Dendritic cell treated with granulocyte-macrophage colony-stimulating factor and Interleukin-4, amounts not matched to agents 40 ng/mL and 50 ng/mL, for 4 days (primary cell): ENCODE measurements at regions of chr1 and their contacts with region 1.

Region 1: DNA sequence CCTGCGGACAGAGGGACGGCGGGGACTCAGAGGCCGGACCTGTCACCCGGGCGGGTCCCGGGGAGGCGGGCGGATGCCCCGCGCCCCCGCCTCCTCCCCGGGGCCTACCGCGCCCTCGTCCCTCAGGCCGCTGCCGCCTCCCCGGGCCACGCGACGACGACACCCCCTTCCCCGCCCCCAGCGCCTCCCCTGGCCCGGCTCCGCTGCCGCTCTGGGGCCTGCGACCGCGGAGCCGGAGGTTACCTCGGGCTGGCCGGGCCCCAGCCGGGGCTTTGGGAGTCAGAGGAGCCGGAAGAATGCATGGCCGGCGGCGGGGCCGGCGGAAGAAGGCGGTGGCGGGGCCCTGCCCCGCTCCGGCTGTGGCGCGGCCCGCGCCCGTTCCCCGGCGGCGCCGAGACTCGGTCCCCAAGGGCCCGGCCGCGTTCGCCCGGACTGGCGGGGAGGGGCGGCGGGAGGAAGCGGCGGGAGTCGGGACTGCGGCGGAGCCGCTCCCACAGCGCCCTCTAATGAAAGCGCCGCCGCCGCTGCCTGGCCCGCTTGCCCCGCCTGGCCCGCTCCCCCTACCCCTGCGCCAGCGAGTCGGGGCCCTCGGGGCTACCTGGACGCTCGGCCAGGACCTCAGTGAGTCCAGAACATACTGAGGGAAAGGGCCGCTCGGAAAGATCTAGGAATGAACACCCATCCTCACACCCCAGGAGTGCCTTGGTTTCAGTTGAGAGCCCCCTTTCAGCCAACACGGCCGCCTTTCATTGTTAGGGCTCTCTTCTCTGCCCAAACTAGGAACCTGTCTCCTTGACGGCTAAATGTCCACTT is at the start of gene LPGAT1:
- H3K4me3 Mint-ChIP-seq: peak within 1 kb of the TSS; percentile 98
- H3K27ac Mint-ChIP-seq: peak within 1 kb of the TSS; percentile 93
- H3K4me1 Mint-ChIP-seq: peaks cover 35% of the 10 kb centered on the region
- H3K27me3 Mint-ChIP-seq: peaks cover 1% of the 10 kb centered on the region

Region 2: GRCh38 chr1:211309617-211310016 is 520.9 kb before region 1 on chr1:
- intact Hi-C with region 1: no loop called
- H3K4me3 Mint-ChIP-seq: no peak overlapping the region
- H3K27ac Mint-ChIP-seq: no peak overlapping the region
- H3K4me1 Mint-ChIP-seq: peaks cover 6% of the 10 kb centered on the region
- H3K27me3 Mint-ChIP-seq: no peaks in the 10 kb centered on the region

Region 3: GRCh38 chr1:211680752-211681327 is 149.7 kb before region 1 on chr1:
- intact Hi-C with region 1: loop called (anchors 5 kb)
- H3K4me3 Mint-ChIP-seq: no peak overlapping the region
- H3K27ac Mint-ChIP-seq: no peak overlapping the region
- H3K4me1 Mint-ChIP-seq: peaks cover 8% of the 10 kb centered on the region
- H3K27me3 Mint-ChIP-seq: peaks cover 7% of the 10 kb centered on the region

Region 4: DNA sequence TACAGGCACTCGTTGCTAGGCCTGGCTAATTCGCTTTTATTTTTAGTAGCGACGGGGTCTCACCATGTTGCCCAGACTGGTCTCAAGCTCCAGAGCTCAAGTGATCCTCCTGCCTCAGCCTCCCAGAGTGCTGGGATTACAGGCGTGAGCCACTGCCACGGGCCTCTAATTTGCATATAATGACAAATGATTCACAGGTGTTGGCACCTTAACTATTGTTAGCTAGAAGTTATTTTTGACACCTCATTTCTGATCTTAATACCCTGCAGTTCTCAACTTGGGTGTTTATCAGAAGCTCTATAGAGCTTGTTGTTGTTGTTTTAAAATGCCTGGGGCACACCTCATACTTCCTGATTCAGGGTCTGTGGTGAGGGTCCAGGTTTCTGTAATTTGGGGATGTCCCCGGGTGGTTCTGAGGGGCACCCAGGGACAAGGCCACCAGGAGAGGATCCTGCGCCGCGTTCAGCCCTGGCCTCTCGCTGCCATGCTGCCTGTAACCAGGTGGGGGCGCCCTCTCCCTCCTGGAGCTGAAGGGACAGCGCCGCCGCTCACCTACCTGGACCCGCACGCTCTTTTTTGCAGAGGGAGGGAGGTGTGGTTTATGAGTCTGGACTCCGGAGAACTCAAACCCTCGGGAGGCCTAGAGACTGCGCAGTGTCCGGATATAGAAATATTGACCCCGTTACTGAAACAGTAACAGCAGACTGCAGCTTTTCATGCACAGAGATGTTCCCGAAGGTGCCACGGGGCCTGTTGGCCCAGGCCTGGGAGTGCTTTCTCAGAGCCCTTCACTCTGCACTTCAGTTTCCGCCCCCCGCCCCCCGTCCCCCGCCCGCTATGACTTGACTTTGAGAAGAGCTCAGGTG is 132.1 kb before region 1 on chr1:
- intact Hi-C with region 1: loop called (anchors 5 kb)
- H3K4me3 Mint-ChIP-seq: peak overlapping the region; percentile 55
- H3K27ac Mint-ChIP-seq: no peak overlapping the region
- H3K4me1 Mint-ChIP-seq: peaks cover 15% of the 10 kb centered on the region
- H3K27me3 Mint-ChIP-seq: peaks cover 26% of the 10 kb centered on the region

Region 5: DNA sequence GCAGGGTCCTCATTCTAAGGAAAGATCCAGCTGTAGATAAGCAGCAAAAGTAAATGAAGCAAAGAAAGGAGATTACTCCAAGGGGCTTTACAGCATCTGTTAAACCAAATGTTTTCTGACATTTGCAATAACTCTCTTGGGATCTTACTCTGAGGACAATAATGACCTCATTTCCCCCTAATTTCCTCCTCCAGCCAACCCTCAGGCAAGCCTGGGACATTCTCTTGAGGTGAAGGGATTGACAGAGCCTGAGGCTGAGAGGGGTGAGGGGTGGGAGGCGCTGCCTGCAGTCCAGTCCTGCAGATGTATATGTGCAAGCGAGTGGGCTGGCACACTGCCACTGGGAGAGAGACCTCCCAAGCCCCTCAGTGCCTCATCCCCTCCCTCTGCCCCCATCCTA is 114.6 kb before region 1 on chr1:
- intact Hi-C with region 1: no loop called
- H3K4me3 Mint-ChIP-seq: no peak overlapping the region
- H3K27ac Mint-ChIP-seq: no peak overlapping the region
- H3K4me1 Mint-ChIP-seq: peaks cover 4% of the 10 kb centered on the region
- H3K27me3 Mint-ChIP-seq: no peaks in the 10 kb centered on the region

Region 6: DNA sequence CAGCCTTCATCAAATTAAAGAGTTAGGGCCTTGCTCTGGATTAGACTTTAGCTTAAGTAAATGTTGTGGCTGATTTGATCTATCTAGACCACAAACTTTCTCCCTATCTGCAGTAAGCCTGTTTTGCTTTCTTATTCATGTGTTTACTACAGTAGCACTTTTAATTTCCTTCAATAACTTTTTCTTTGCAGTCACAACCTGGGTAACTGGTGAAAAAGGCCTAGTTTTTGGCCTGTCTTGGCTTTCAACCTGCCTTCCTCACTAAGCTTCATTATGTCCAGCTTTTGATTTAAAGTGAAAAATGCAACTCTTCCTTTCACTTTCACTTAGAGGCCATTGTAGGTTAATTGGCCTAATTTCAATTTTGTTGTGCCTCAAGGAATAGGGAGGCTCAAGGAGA is 12.5 kb after region 1 on chr1:
- intact Hi-C with region 1: no loop called
- H3K4me3 Mint-ChIP-seq: no peak overlapping the region
- H3K27ac Mint-ChIP-seq: peak overlapping the region; percentile 46
- H3K4me1 Mint-ChIP-seq: peaks cover 9% of the 10 kb centered on the region
- H3K27me3 Mint-ChIP-seq: no peaks in the 10 kb centered on the region

Region 7: DNA sequence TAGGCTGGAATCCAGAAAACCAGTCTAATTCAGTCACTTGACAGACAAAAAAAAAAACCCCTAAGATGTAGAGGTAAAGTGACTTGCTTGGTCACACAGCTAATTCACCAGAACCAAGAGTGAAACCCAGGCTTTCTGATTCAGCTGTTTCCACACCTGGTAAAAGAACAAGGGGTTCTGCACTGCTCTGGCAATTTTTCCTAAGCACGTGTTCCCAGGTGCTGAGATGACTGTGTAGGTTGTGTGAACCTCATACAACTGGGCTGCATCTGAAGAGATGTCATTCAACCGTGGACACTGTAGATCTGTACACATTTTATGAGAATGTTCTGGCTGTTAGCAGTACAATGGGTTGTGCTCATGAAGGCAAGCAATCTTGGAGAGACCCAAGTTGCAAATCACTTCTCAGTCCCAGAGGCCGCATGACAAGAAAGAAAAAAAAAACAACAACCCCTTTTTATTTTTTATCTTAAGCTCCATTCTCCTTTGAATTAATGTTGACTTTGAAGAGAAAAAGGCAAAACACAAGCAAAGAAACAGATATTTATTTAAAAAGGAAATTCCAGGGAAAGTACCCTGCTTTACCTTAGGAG is 109.4 kb after region 1 on chr1:
- intact Hi-C with region 1: loop called (anchors 10 kb)
- H3K4me3 Mint-ChIP-seq: no peak overlapping the region
- H3K27ac Mint-ChIP-seq: no peak overlapping the region
- H3K4me1 Mint-ChIP-seq: peaks cover 23% of the 10 kb centered on the region
- H3K27me3 Mint-ChIP-seq: no peaks in the 10 kb centered on the region